ENCODE measurements at regions of chr2 and their contacts with region 1.

Region 1: DNA sequence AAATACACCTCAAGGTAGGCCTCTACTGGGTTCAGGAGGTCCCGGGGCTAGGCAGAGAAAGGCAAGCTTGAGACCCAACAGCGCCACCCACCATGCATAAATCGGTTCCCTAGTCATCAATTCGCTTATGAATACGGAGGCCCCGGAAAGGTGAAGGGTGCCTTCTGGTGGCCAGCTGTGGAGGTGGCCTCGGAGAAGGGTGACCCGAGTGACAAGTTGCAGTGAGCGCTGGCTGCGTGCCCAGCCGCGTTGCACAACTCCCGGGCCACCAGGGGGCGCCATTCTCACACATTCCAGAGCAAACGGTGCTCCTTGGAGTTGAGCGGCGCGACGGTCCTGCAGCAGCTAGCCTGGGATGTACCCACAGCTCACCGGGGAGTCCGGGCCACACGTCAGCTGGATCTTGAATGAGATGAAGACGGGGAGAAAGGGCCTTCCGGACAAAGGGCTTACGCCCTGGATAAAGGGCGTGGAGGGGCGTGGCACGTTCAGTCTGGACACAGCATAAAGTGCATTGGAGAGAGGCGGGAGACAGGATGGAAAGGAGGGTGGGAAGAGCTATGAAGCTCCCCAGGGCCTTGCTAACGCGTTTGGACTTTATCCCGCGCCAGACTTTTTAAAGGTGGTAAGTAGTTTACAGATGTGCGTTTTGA is 20.4 kb downstream of the TMSB10 start:
- H3K4me3 ChIP-seq: peak overlapping the region; percentile 20
- H3K27ac ChIP-seq: no peak overlapping the region
- H3K4me1 ChIP-seq: no peaks in the 10 kb centered on the region
- CTCF ChIP-seq: peak; percentile 99

Region 2: GRCh38 chr2:84493514-84493913 is 432.3 kb before region 1 on chr2:
- CTCF ChIA-PET with region 1: interaction called, 10 read pairs
- POLR2A ChIA-PET with region 1: no interaction called
- H3K4me3 ChIP-seq: no peak overlapping the region
- H3K27ac ChIP-seq: no peak overlapping the region
- H3K4me1 ChIP-seq: no peaks in the 10 kb centered on the region
- CTCF ChIP-seq: no peak

Region 3: DNA sequence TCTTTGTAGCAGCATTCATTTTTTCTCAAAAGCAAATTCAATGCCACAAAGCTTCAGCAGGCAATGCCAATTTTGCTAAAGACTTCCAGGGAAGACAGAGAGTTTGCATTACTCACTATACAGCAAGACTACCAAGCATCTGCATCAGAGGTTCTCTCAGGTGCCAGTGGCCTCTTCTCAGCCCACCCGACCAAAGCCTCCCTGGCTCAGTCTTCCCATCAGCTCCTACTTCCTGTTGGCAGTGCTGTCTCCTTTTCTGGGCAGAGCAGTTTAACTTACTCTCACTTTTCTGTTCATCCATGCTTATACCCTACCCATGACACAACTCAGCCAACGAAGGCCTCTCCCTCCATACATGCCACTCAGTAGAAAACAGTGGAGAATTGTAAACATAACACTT is 202.0 kb before region 1 on chr2:
- CTCF ChIA-PET with region 1: no interaction called
- POLR2A ChIA-PET with region 1: no interaction called
- H3K4me3 ChIP-seq: no peak overlapping the region
- H3K27ac ChIP-seq: no peak overlapping the region
- H3K4me1 ChIP-seq: no peaks in the 10 kb centered on the region
- CTCF ChIP-seq: no peak

Region 4: GRCh38 chr2:84830758-84831500 is 94.9 kb before region 1 on chr2:
- CTCF ChIA-PET with region 1: no interaction called
- POLR2A ChIA-PET with region 1: no interaction called
- H3K4me3 ChIP-seq: no peak overlapping the region
- H3K27ac ChIP-seq: no peak overlapping the region
- H3K4me1 ChIP-seq: no peaks in the 10 kb centered on the region
- CTCF ChIP-seq: no peak

Region 5: DNA sequence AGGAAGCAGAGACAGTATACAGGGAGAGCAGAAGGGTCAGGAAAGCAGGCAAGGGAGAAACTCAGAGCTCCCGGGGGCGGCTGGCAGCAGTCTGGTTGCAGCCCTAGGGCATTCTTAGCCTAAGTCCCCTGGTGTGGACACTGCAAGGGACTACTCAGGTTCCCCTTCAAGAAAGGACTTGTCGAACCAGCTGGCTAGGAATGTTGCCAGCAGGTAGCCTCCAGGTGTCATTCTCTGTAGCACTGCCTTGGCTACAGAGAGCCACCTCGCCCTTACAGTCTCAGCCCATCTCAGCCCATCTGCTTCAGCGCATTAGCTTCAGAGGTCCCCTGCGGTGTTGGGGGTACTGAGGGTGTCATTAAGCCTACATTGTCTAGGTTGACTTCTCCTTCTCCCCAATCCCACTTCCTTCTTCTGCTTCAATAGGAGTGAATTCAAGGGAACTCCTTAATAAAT is 31.7 kb before region 1 on chr2:
- CTCF ChIA-PET with region 1: interaction called, 24 read pairs
- POLR2A ChIA-PET with region 1: no interaction called
- H3K4me3 ChIP-seq: no peak overlapping the region
- H3K27ac ChIP-seq: no peak overlapping the region
- H3K4me1 ChIP-seq: no peaks in the 10 kb centered on the region
- CTCF ChIP-seq: no peak

Region 6: DNA sequence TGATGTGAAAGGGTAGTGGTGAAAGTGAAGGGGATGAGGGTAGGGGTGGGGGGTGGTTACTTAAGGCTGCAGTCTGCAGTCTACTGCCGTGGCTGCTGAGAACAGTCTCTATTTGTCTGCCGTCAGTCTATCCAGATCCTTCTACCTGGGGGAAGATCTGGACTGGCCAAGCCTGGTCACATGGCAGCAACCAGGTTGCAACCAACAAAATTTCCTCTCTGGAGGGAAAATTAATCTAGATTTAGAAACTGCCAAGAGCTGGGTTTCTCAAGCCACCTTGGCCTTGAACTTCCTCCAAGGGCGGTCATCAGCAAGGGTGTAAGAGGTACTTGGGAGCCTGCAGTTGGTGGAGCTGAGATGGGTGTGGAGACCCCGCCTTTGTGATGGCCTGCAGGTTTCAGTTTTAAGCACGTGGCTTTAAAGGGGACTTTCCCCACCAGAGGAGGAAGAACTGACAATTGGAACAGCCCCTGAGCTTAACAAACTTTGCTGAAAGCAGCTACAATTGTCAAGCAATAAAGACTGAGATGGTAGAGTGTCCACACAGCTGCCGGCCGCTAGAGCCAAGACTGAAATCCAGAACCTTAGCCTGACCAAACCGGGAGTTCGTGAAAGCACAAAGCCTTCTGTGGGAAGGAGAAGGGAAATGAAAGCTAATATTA is 13.7 kb after region 1 on chr2:
- CTCF ChIA-PET with region 1: interaction called, 27 read pairs
- POLR2A ChIA-PET with region 1: no interaction called
- H3K4me3 ChIP-seq: no peak overlapping the region
- H3K27ac ChIP-seq: no peak overlapping the region
- H3K4me1 ChIP-seq: no peaks in the 10 kb centered on the region
- CTCF ChIP-seq: no peak

Region 7: GRCh38 chr2:84970868-84971509 is 45.1 kb after region 1 on chr2 and contains the start of gene KCMF1:
- CTCF ChIA-PET with region 1: interaction called, 11 read pairs
- POLR2A ChIA-PET with region 1: interaction called, 10 read pairs
- H3K4me3 ChIP-seq: peak within 1 kb of the TSS; percentile 86
- H3K27ac ChIP-seq: peak within 1 kb of the TSS; percentile 99
- H3K4me1 ChIP-seq: peaks cover 10% of the 10 kb centered on the region
- CTCF ChIP-seq: no peak

Region 8: DNA sequence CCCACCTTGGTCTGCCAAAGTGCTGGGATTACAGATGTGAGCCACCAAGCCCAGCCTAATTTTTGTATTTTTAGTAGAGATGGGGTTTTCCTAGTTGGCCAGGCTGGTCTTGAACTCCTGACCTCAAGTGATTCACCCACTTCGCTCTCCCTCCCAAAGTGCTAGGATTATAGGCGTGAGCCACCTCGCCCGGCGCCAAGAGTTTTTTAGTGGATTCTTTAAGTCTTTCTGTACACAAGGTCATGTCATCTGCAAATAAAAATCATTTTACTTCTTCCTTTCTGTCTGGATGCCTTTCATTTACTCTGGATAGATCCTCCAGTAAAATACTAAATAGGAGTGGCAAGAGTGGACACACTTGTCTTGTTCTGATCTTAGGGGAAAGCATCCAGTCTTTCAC is 106.8 kb after region 1 on chr2:
- CTCF ChIA-PET with region 1: interaction called, 10 read pairs
- POLR2A ChIA-PET with region 1: no interaction called
- H3K4me3 ChIP-seq: no peak overlapping the region
- H3K27ac ChIP-seq: no peak overlapping the region
- H3K4me1 ChIP-seq: no peaks in the 10 kb centered on the region
- CTCF ChIP-seq: no peak

Region 9: GRCh38 chr2:85181134-85181631 is 255.3 kb after region 1 on chr2:
- CTCF ChIA-PET with region 1: no interaction called
- POLR2A ChIA-PET with region 1: no interaction called
- H3K4me3 ChIP-seq: no peak overlapping the region
- H3K27ac ChIP-seq: no peak overlapping the region
- H3K4me1 ChIP-seq: peaks cover 4% of the 10 kb centered on the region; the same call in 1 of the 2 replicates
- CTCF ChIP-seq: no peak

Region 10: DNA sequence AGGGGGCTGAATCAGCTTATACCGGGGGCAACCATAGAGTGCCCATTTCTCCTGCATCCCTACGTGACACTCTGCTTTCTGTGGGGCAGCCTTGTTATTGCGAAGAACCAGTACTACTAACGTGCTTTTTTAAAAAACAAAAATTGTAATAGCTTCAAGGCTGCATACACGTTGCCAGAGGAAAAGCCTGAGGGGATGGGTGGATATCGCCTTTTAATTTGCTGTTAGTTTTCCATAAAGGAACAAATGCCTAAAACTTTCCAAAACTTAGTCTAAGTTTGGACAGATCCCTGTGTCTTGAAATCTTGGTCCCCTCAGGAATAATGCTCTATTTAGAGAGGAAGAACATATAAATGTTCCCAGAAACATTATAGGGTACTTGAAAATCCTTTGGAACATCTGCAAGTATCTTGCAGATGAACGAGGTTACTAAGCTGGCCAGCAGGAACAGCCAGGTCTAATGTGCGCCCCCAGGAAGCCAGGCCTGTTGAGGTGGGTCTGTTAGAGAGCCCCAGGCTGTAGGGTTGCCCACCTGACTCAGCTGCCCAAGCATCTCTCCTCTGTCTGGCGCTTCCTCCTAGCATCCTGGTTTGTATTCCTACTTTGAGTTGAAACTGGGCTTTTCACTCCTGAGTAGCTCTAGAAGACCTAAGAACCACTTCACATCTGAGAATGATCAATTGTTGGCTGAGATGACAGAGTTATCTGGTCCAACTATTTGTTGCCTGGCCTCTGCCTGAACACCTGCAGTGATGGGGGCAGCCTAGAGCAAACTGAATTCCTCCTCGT is 305.0 kb after region 1 on chr2:
- CTCF ChIA-PET with region 1: no interaction called
- POLR2A ChIA-PET with region 1: no interaction called
- H3K4me3 ChIP-seq: no peak overlapping the region
- H3K27ac ChIP-seq: no peak overlapping the region
- H3K4me1 ChIP-seq: no peaks in the 10 kb centered on the region
- CTCF ChIP-seq: peak; percentile 29

Region 11: DNA sequence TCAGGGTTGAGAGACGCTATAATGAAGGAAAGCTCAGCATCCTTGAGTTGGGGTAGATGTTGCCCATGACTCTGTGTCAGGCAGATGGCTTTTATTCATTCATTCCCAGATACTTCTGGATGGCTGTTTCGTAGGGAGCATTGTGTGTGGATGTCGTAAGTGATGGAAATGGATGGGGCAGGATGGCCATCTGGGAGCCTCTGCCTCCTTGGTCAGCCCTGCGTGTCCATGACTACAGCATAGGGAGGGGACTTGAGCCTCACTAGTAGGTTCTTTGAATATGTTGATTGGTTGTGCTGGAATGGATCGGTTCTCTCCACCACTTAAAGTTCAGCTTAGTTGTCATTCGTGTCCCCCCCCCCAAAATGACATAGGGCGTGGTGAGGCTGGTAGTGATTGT is 357.1 kb after region 1 on chr2:
- CTCF ChIA-PET with region 1: interaction called, 19 read pairs
- POLR2A ChIA-PET with region 1: no interaction called
- H3K4me3 ChIP-seq: no peak overlapping the region
- H3K27ac ChIP-seq: no peak overlapping the region
- H3K4me1 ChIP-seq: no peaks in the 10 kb centered on the region
- CTCF ChIP-seq: no peak